Esophagus squamous epithelium (tissue), 5 donors: ENCODE measurements at regions of chr6 and their contacts with region 1.

Region 1: DNA sequence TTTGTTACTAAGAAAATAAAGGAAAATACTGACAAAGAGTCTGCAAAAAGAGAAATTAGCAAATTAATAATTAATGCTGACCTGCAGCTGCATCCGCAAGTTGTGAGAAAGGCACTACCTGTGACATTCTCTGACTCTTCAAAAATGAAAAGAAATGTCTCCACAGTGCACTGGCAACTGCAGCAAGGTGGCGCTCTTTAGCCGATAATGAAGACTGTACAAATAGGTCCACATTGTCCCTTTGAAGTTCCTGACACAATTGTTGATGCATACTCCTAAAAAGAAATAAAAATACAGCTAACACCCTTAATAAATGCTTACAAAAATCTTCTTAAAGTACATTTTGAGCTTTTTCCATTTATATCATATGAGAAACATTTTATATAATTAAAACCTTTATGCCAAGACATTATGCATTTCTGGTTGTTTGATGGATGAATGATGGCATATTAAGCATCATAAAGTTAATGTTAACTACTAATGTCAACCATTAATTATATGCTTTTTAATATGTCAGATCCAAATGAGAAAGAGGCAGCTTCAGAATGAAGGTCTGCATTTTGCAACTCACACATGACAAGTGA is 96.5 kb downstream of the MMS22L start:
- DNase-seq: no peak
- H3K4me3 ChIP-seq: no peak overlapping the region
- H3K27ac ChIP-seq: no peak overlapping the region
- H3K4me1 ChIP-seq: no peaks in the 10 kb centered on the region
- H3K27me3 ChIP-seq: no peaks in the 10 kb centered on the region
- CTCF ChIP-seq: peak; percentile 72 to 81 (median 76)
- POLR2A ChIP-seq: no peak

Region 2: GRCh38 chr6:97129106-97129505 is 57.4 kb before region 1 on chr6:
- intact Hi-C with region 1: no loop called
- DNase-seq: no peak
- H3K4me3 ChIP-seq: no peak overlapping the region
- H3K27ac ChIP-seq: no peak overlapping the region
- H3K4me1 ChIP-seq: no peaks in the 10 kb centered on the region
- H3K27me3 ChIP-seq: no peaks in the 10 kb centered on the region
- CTCF ChIP-seq: no peak
- POLR2A ChIP-seq: no peak

Region 3: DNA sequence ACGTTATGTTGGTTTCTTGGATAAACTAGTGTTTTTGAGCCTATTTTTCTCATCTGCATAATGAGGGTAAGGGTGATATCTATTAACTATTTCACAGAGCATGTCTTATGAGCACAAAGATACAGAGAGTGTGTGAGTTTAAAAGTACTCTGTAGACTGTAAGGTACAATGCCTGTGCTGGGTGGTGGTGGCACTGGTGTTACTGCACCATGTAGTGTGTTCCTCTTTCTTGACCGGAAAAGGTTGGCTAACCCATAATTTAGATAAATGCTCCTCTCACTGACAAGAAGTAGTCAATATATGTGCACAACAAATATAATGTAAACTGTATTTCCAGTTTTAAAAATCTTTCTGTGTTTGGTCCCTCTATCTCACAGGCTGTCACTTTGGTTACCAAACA is 212.7 kb after region 1 on chr6:
- intact Hi-C with region 1: loop called (anchors 5 kb)
- DNase-seq: no peak
- H3K4me3 ChIP-seq: no peak overlapping the region
- H3K27ac ChIP-seq: no peak overlapping the region
- H3K4me1 ChIP-seq: no peaks in the 10 kb centered on the region
- H3K27me3 ChIP-seq: no peaks in the 10 kb centered on the region
- CTCF ChIP-seq: no peak
- POLR2A ChIP-seq: no peak